HCT116 (cell line): ENCODE measurements at regions of chr20 and their contacts with region 1.

Region 1: GRCh38 chr20:25195014-25195961 is at the start of gene ENTPD6:
- DNase-seq: peak; percentile 61
- ATAC-seq: peak; percentile 82
- H3K4me3 ChIP-seq: peak within 1 kb of the TSS; percentile 74 to 99
- H3K27ac ChIP-seq: peak within 1 kb of the TSS; percentile 80
- H3K4me1 ChIP-seq: peaks cover 9 to 25% of the 10 kb centered on the region in 2 experiments; a peak in 3 of 4 replicates
- H3K27me3 ChIP-seq: no peaks in the 10 kb centered on the region
- CTCF ChIP-seq: peak in 2 of 3 experiments; percentile 12; a peak in 1 of 6 replicates
- POLR2A ChIP-seq: peak; percentile 78
- RAD21 ChIP-seq: no peak
- total RNA-seq, gene ENTPD6: 89.2 TPM

Region 2: DNA sequence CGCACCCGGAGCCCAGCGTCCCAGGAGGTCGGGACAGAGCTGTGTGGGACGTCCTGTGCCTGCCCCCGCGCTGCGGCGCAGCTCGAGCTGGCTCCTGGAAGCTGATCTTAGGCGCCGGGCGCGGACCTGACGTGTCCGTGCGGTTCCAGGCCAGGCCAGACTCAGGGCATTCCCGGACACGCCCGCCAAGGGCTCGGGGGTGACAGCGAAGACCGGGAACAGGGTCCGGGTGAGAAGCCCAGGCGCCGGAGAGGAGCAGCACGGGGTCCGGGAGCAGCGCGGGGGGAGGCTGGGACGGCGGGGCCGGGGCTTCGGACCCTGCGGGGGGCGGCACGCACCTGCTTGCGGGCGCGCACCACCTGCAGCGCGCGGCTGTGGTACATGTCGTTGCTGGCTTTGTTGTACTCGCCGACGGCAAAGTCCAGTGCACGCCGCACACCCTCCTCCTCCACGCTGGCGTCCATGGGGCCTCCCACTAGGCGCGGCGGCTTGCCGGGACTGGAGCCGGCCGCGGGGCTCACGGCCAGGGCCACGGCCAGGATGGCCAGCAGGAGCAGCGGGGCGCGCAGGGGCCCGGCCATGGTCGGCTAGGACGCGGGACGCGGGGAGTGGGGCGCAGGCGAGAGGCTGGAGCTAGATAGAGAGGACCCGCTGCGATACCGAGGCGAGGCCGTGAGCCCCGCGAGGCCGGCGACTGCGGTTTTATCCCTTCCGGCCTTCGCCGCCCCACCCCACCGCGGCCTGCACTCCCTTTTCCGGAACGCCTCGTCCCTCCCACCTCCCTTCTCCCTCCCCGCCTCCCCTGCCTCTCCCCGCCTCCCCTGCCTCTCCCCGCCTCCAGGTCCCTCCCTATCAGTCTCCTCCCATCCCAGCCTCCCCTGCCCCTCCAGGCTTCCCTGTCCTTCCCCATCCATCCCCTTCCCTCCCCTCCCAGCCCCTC is 1557.7 kb before region 1 on chr20 and contains the start of gene CST3:
- CTCF ChIA-PET with region 1: no interaction called
- POLR2A ChIA-PET with region 1: no interaction called
- RAD21 ChIA-PET with region 1: no interaction called
- intact Hi-C with region 1: loop called (anchors 10 kb)
- DNase-seq: peak; percentile 68
- ATAC-seq: peak; percentile 87
- H3K4me3 ChIP-seq: peak within 1 kb of the TSS; percentile 77 to 91
- H3K27ac ChIP-seq: peak within 1 kb of the TSS; percentile 86
- H3K4me1 ChIP-seq: peaks cover 29 to 41% of the 10 kb centered on the region in 2 experiments
- H3K27me3 ChIP-seq: no peaks in the 10 kb centered on the region
- CTCF ChIP-seq: no peak
- POLR2A ChIP-seq: peak; percentile 84
- RAD21 ChIP-seq: no peak
- total RNA-seq, gene CST3: 181 TPM

Region 3: GRCh38 chr20:25372584-25373336 is 177.5 kb after region 1 on chr20:
- CTCF ChIA-PET with region 1: no interaction called
- POLR2A ChIA-PET with region 1: no interaction called
- RAD21 ChIA-PET with region 1: no interaction called
- intact Hi-C with region 1: no loop called
- DNase-seq: no peak
- ATAC-seq: no peak
- H3K4me3 ChIP-seq: no peak overlapping the region
- H3K27ac ChIP-seq: no peak overlapping the region
- H3K4me1 ChIP-seq: no peaks in the 10 kb centered on the region
- H3K27me3 ChIP-seq: no peaks in the 10 kb centered on the region
- CTCF ChIP-seq: no peak
- POLR2A ChIP-seq: no peak
- RAD21 ChIP-seq: no peak

Region 4: DNA sequence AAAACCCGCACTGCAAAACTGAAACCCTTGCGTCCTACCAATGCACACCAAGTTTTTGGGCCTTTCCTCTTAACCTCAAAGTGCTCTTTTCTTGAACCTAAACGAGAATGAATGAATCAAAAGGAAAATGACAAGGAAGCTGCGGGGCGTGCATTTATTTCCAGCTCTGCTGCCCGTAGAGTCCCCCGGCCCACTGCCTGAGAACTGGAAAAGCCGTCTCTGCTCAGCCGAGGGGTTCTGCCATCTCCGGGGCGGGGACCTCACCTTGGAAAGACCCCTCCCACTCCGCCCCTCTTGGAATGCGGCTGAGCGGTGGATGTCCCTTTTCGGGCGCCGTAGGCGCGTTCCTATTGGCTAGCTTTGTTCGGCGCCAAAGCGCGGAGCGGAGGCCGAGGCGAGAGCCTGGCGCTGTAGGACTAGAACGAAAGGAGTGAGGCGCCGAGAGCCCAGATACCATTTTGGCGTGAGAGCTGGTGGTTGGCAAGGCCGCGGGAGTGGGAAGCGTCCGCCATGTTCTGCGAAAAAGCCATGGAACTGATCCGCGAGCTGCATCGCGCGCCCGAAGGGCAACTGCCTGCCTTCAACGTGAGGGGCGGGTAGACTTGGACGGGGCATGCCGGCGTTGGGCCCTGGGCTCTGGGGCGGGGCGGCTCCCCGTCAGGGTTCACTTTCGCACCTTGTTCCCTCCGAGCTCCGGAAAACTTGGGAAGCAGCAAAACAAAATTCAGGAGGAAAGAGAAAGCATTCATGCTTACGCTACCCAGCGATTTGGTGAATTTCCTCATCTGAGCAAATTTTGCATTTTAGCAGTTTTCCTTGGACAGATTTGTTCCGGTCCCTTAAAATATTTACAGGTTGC is 212.3 kb after region 1 on chr20 and contains the start of gene GINS1:
- CTCF ChIA-PET with region 1: no interaction called
- POLR2A ChIA-PET with region 1: no interaction called
- RAD21 ChIA-PET with region 1: no interaction called
- intact Hi-C with region 1: no loop called
- DNase-seq: peak; percentile 90
- ATAC-seq: peak; percentile 92
- H3K4me3 ChIP-seq: peak within 1 kb of the TSS; percentile 82 to 83
- H3K27ac ChIP-seq: peak within 1 kb of the TSS; percentile 68
- H3K4me1 ChIP-seq: peaks cover 10 to 15% of the 10 kb centered on the region in 2 experiments
- H3K27me3 ChIP-seq: no peaks in the 10 kb centered on the region
- CTCF ChIP-seq: no peak
- POLR2A ChIP-seq: peak; percentile 91
- RAD21 ChIP-seq: no peak
- total RNA-seq, gene GINS1: 30.4 TPM